ENCODE measurements at regions of chr9 and their contacts with region 1.

Region 1: GRCh38 chr9:137406876-137407589 is 15.9 kb downstream of the EXD3 start:
- DNase-seq: no peak
- ATAC-seq: peak; percentile 74

Region 2: DNA sequence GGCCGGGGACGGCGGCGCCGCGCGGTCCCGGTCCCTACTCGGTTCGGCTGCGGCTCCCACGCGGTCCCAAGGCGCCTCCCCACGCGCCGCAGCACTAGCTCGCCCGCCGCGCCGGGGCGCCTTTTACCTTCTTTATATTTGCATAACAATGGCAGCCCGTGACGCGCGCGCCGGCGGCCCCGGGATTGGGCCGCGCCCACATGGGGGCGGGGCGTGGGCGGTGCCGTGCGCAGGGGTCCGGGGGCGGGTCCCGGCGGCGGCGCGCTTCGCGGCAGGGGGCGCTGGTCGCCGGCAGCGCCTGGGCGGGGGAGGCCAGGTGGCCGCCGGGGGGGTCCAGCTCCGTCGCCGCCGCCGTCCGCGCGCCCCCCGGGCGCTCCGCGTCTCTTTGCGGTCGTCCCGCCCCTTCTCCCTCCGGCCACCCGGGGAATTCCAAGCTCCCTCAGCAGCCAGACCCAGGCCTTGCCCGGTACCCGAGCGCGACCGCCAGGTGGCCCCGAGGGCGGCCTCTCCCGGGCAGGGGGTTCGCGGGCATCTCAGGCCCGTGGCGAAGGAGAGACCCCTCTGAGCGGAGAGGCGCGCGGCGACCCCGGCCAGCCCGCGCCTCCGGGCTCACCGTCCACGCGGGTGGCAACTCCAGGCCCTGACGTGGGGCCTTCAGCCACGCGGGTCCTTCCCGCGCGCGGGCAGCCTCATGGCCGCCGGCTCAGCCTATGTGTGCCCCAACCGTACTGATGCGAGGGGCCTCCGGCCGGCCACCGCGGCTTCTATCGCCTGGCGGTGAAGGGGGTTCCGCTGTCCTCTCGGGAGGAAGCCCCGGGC is 104.6 kb before region 1 on chr9 and contains the start of gene NRARP:
- intact Hi-C with region 1: loop called (anchors 5 kb)
- DNase-seq: peak; percentile 89
- ATAC-seq: peak; percentile 58
- total RNA-seq, gene NRARP: 18.5 TPM

Measured in sciatic nerve (tissue), 2 donors.